Activated naive CD4-positive, alpha-beta T cell treated with anti-CD3 and anti-CD28 coated beads, Interleukin-2, amount 10 ng/mL, durations not matched to agents 7 days and 5 days (primary cell): ENCODE measurements at regions of chr11 and their contacts with region 1.

Region 1: GRCh38 chr11:73661035-73661628 is 14.8 kb downstream of the PLEKHB1 start:
- DNase-seq: peak; percentile 88
- H3K4me3 Mint-ChIP-seq: peak overlapping the region; percentile 3
- H3K27ac Mint-ChIP-seq: no peak overlapping the region
- H3K4me1 Mint-ChIP-seq: peaks cover 17% of the 10 kb centered on the region
- H3K27me3 Mint-ChIP-seq: peaks cover 8% of the 10 kb centered on the region

Region 2: DNA sequence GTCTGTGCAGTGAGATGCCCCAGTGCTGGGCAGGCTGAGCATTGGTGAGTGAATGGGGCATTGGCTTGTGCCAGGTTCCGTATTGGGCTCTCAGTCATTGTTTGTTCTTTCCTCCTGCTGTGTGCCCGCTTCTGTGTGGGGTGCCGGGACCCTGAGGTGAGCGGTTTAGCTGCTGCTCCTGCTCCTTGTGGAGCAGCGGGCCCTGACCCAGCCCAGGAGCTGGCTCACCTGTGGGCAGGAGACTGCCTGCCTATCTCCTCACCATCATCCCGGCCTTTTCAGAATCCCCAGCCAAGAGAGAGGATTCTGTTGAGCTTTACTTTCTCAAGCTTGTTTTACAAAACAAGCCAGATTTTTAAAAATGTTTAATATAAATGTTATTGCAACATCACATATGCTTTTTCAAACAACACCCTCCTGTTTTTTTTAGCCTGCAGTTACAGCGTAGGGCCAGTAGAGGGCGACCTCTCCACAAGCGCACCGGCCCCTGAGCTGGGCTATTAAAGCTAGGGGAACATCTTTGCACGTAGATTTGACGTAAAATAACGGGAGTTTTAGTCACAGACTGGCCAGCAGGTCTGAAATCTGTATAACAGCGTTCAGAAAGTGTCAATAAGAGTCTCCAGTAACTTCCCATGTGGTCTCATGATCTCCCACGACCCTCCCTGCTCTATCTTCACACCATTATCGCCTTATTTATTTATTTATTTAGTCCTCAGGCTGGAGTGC is 310.1 kb before region 1 on chr11:
- CTCF ChIA-PET with region 1: interaction called, 61 read pairs
- DNase-seq: peak; percentile 70
- H3K4me3 Mint-ChIP-seq: no peak overlapping the region
- H3K27ac Mint-ChIP-seq: no peak overlapping the region
- H3K4me1 Mint-ChIP-seq: peaks cover 17% of the 10 kb centered on the region
- H3K27me3 Mint-ChIP-seq: peaks cover 41% of the 10 kb centered on the region

Region 3: DNA sequence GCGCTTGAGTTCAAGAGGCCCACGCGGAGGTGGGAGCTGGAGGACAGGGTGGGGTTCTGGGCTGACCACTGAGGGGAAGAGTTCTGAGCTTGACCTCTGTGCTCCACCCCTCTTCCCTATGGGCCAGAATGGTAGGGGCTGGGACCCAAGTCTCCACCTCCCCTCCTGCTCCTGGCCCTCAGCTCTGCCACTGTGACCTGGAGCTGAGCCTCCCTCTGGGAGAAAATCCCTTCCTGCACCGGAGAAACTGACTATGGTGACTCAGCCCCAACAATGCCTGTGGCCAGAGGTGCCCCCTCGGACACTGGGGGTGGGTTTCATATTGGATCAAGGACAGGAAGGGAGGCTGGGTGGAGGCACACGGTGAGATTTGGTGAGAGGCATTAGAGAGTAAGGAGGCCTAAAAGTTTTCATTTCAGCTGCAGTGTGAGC is 262.0 kb before region 1 on chr11:
- CTCF ChIA-PET with region 1: interaction called, 19 read pairs
- DNase-seq: no peak
- H3K4me3 Mint-ChIP-seq: no peak overlapping the region
- H3K27ac Mint-ChIP-seq: no peak overlapping the region
- H3K4me1 Mint-ChIP-seq: no peaks in the 10 kb centered on the region
- H3K27me3 Mint-ChIP-seq: no peaks in the 10 kb centered on the region

Region 4: GRCh38 chr11:73478738-73479347 is 182.3 kb before region 1 on chr11:
- CTCF ChIA-PET with region 1: interaction called, 21 read pairs
- DNase-seq: no peak
- H3K4me3 Mint-ChIP-seq: no peak overlapping the region
- H3K27ac Mint-ChIP-seq: no peak overlapping the region
- H3K4me1 Mint-ChIP-seq: no peaks in the 10 kb centered on the region
- H3K27me3 Mint-ChIP-seq: no peaks in the 10 kb centered on the region

Region 5: GRCh38 chr11:73625696-73626318 is 35.3 kb before region 1 on chr11:
- CTCF ChIA-PET with region 1: interaction called, 144 read pairs
- DNase-seq: peak; percentile 78
- H3K4me3 Mint-ChIP-seq: no peak overlapping the region
- H3K27ac Mint-ChIP-seq: no peak overlapping the region
- H3K4me1 Mint-ChIP-seq: peaks cover 3% of the 10 kb centered on the region
- H3K27me3 Mint-ChIP-seq: peaks cover 55% of the 10 kb centered on the region

Region 6: GRCh38 chr11:73633999-73634398 is 27.1 kb before region 1 on chr11:
- CTCF ChIA-PET with region 1: interaction called, 13 read pairs
- DNase-seq: no peak
- H3K4me3 Mint-ChIP-seq: no peak overlapping the region
- H3K27ac Mint-ChIP-seq: peak overlapping the region; percentile 24
- H3K4me1 Mint-ChIP-seq: peaks cover 9% of the 10 kb centered on the region
- H3K27me3 Mint-ChIP-seq: no peaks in the 10 kb centered on the region

Region 7: DNA sequence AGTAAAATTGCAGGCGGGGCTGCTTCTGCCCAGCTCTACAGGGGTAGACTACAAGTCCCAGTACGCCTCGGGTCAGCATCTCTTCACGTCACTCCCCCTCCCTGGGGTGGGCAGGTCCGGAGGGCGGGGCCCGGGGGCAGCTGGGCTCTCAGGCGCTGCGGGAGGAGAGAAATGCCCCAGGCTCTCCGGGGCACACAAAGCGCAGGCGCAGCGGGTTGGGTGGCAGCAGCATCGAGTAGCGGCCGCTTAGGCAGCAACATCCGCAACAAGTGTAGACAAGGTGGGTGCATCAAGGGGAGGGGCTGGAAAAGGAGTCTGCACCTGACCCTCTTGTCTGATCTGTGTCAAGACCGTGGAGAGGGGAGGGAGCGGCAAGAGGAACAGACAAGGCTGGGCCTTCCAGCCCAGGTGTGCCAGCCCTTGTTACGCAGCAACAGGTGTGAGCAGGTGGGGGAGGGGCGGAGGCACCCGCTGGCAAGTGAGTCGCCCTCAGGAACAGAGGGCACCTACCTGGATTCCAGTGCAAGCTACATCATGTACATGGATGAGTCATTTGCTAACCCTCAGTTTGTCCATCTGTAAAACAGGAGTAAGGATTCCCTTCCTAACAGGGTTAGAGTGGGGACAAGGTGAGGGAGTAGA is 13.6 kb before region 1 on chr11:
- CTCF ChIA-PET with region 1: interaction called, 25 read pairs
- DNase-seq: peak; percentile 94
- H3K4me3 Mint-ChIP-seq: peak overlapping the region; percentile 71
- H3K27ac Mint-ChIP-seq: peak overlapping the region; percentile 37
- H3K4me1 Mint-ChIP-seq: peaks cover 18% of the 10 kb centered on the region
- H3K27me3 Mint-ChIP-seq: peaks cover 26% of the 10 kb centered on the region

Region 8: GRCh38 chr11:74037309-74037708 is 376.2 kb after region 1 on chr11:
- CTCF ChIA-PET with region 1: no interaction called
- DNase-seq: no peak
- H3K4me3 Mint-ChIP-seq: no peak overlapping the region
- H3K27ac Mint-ChIP-seq: no peak overlapping the region
- H3K4me1 Mint-ChIP-seq: peaks cover 8% of the 10 kb centered on the region
- H3K27me3 Mint-ChIP-seq: no peaks in the 10 kb centered on the region